CD4-positive, alpha-beta T cell (primary cell): ENCODE measurements at regions of chr20 and their contacts with region 1.

Region 1: DNA sequence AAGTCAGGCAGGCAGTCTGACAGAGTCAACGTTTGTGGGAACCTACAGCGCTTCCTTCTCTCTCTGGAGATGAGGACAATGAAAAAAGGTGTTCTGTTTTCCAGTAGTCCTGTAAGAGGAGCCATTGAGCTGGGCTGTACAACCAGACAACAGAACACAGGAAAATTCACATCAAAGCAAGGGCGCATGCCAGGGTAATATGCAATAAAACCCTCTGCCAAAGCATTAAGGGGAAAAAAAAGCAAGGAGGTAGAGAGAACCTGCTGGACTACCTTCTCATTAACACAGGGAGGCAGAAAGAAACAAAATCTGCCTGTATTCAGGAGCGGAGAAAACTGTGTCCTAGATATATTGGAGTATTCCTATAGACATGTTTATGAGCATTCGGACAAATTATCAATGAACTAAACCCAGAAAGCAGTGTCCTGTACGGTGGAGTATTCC is 1.3 kb downstream of the RNF24 start:
- DNase-seq: peak in 6 of 14 experiments; percentile 23 to 77 (median 56)
- ATAC-seq: peak; percentile 33
- H3K4me3 ChIP-seq: peak overlapping the region; percentile 70
- H3K4me3 Mint-ChIP-seq: peak overlapping the region; percentile 90
- H3K27ac ChIP-seq: peak overlapping the region in 1 of 2 donors; percentile 4
- H3K27ac Mint-ChIP-seq: peak overlapping the region; percentile 79
- H3K4me1 ChIP-seq: peaks cover 28% of the 10 kb centered on the region
- H3K4me1 Mint-ChIP-seq: peaks cover 37% of the 10 kb centered on the region
- H3K27me3 ChIP-seq: no peaks in the 10 kb centered on the region
- H3K27me3 Mint-ChIP-seq: no peaks in the 10 kb centered on the region
- CTCF ChIP-seq: peak; percentile 71

Region 2: GRCh38 chr20:3732327-3733118 is 281.5 kb before region 1 on chr20 and contains the start of gene HSPA12B:
- CTCF ChIA-PET with region 1: no interaction called
- POLR2A ChIA-PET with region 1: no interaction called
- intact Hi-C with region 1: no loop called
- DNase-seq: no peak
- ATAC-seq: no peak
- H3K4me3 ChIP-seq: no peak within 1 kb of the TSS
- H3K4me3 Mint-ChIP-seq: no peak within 1 kb of the TSS
- H3K27ac ChIP-seq: no peak within 1 kb of the TSS
- H3K27ac Mint-ChIP-seq: no peak within 1 kb of the TSS
- H3K4me1 ChIP-seq: no peaks in the 10 kb centered on the region
- H3K4me1 Mint-ChIP-seq: no peaks in the 10 kb centered on the region
- H3K27me3 ChIP-seq: peaks cover 38 to 45% of the 10 kb centered on the region in 2 experiments
- H3K27me3 Mint-ChIP-seq: peaks cover 57% of the 10 kb centered on the region
- CTCF ChIP-seq: no peak
- total RNA-seq, gene HSPA12B: 0.08 TPM in 1 of 2 experiments, not detected in the other

Region 3: GRCh38 chr20:3753098-3753980 is 260.7 kb before region 1 on chr20:
- CTCF ChIA-PET with region 1: no interaction called
- POLR2A ChIA-PET with region 1: no interaction called
- intact Hi-C with region 1: loop called in 1 of 2 experiments (anchors 5 kb)
- DNase-seq: peak; percentile 45 to 83 (median 56)
- ATAC-seq: peak; percentile 64
- H3K4me3 ChIP-seq: no peak overlapping the region
- H3K4me3 Mint-ChIP-seq: peak overlapping the region; percentile 92
- H3K27ac ChIP-seq: no peak overlapping the region
- H3K27ac Mint-ChIP-seq: peak overlapping the region; percentile 70
- H3K4me1 ChIP-seq: peaks cover 13% of the 10 kb centered on the region
- H3K4me1 Mint-ChIP-seq: peaks cover 14% of the 10 kb centered on the region
- H3K27me3 ChIP-seq: peaks cover 0 to 7% of the 10 kb centered on the region in 2 experiments
- H3K27me3 Mint-ChIP-seq: no peaks in the 10 kb centered on the region
- CTCF ChIP-seq: peak; percentile 60

Region 4: DNA sequence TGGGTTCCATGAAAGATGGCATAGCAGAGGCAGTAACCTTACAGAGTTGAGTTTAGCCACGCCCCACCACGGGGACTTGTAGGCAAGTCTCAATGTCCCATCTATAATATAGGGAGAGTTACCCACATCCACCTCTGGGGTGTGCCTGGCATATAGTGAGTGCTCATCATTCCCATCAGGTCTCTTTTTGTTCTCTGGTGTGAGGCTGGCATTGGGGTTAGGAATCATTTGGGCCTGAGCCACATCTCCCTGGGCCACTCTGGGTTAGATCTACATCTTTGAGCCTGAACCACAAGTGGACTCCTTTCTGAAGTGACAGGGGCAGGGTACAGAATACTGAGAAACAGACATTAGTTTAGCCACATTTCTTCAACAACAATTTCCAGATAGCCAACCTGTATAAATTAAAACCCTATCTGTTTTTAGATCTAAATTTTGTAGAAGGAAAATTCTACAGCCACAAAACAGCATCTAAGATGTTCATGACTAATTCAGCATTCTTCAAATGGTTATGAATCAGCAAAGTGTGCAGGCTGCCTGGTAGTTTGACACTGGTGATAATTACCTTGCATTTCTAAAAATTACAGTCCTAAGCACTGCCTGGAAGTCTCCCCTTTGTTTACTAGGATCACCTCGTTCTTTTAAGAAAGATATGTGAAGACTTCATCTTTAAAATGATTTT is 18.8 kb before region 1 on chr20:
- CTCF ChIA-PET with region 1: interaction called, 12 read pairs
- POLR2A ChIA-PET with region 1: interaction called, 9 read pairs
- intact Hi-C with region 1: loop called in 1 of 2 experiments (anchors 1 kb)
- DNase-seq: peak in 4 of 14 experiments; percentile 29 to 54 (median 40)
- ATAC-seq: peak; percentile 51
- H3K4me3 ChIP-seq: no peak overlapping the region
- H3K4me3 Mint-ChIP-seq: peak overlapping the region; percentile 2
- H3K27ac ChIP-seq: no peak overlapping the region
- H3K27ac Mint-ChIP-seq: peak overlapping the region; percentile 22
- H3K4me1 ChIP-seq: peaks cover 23% of the 10 kb centered on the region
- H3K4me1 Mint-ChIP-seq: peaks cover 54% of the 10 kb centered on the region
- H3K27me3 ChIP-seq: no peaks in the 10 kb centered on the region
- H3K27me3 Mint-ChIP-seq: no peaks in the 10 kb centered on the region
- CTCF ChIP-seq: no peak

Region 5: DNA sequence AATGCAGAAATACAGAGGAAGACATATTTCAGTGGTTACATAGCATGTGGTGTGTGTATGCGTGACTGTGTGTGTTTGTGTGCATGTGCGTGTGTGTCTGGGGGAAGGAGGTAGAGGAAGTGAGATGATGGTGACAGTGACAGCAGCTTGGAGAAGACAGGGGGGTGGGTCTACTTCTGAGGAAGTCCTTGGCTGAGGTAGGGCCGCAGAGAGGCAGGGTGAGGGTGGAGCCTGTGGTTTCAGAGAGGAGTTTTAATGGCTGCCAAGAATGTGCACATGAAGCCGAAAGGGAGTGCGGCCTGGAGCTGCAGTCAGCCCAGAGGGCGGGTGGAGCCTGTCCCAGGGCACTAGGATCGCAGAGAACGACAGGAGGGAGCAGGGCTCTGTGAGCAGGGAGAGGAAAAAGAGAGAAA is 24.0 kb after region 1 on chr20:
- CTCF ChIA-PET with region 1: interaction called, 3 read pairs
- POLR2A ChIA-PET with region 1: interaction called, 8 read pairs
- intact Hi-C with region 1: loop called (anchors 1 to 2 kb)
- DNase-seq: peak; percentile 67 to 96 (median 78)
- ATAC-seq: peak; percentile 100
- H3K4me3 ChIP-seq: peak overlapping the region; percentile 29
- H3K4me3 Mint-ChIP-seq: peak overlapping the region; percentile 74
- H3K27ac ChIP-seq: peak overlapping the region; percentile 37 to 66
- H3K27ac Mint-ChIP-seq: peak overlapping the region; percentile 86
- H3K4me1 ChIP-seq: peaks cover 25% of the 10 kb centered on the region
- H3K4me1 Mint-ChIP-seq: peaks cover 17% of the 10 kb centered on the region
- H3K27me3 ChIP-seq: no peaks in the 10 kb centered on the region
- H3K27me3 Mint-ChIP-seq: no peaks in the 10 kb centered on the region
- CTCF ChIP-seq: no peak

Region 6: DNA sequence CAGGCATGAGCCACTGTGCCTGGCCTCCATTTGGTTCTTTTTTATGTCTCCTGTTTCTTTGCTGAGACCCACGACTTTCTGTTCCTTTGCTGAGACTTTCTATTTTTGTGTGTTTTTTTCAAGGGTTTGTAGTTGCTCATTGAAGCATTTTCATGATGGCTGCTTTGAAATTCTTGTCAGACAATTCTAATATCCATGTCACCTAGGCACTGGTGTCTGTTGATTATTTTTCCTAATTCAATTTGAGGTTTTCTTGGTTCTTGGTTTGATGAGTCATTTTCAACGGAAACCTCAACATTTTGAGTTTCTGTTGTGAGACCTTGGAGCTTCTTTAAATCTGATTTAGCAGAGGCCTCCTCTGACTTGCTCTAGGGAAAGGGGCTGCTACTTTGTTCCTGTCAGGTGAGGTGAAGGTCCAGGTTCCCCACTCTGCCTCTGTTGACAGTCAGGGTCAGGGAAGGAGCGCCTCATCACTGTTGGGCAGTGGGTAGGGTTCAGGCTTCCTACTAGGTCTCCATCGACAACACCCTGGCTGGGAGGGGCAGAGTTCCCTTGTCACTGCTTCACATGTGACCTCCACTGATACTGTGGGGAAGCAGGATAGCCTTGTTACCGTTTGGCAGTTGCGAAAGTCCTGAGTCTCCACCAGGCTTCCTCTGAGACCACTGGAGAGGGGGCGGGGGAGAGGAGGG is 68.5 kb after region 1 on chr20:
- CTCF ChIA-PET with region 1: interaction called, 21 read pairs
- POLR2A ChIA-PET with region 1: interaction called, 14 read pairs
- intact Hi-C with region 1: loop called (anchors 1 kb)
- DNase-seq: peak; percentile 15 to 80 (median 38)
- ATAC-seq: peak; percentile 69
- H3K4me3 ChIP-seq: peak overlapping the region; percentile 28
- H3K4me3 Mint-ChIP-seq: peak overlapping the region; percentile 0
- H3K27ac ChIP-seq: peak overlapping the region in 1 of 2 donors; percentile 72
- H3K27ac Mint-ChIP-seq: peak overlapping the region; percentile 72
- H3K4me1 ChIP-seq: peaks cover 38% of the 10 kb centered on the region
- H3K4me1 Mint-ChIP-seq: peaks cover 42% of the 10 kb centered on the region
- H3K27me3 ChIP-seq: no peaks in the 10 kb centered on the region
- H3K27me3 Mint-ChIP-seq: no peaks in the 10 kb centered on the region
- CTCF ChIP-seq: no peak